Activated T-helper 2 cell treated with anti-CD3 and anti-CD28 coated beads, Interferon-gamma antibody, Interleukin-2, Interleukin-4, amounts not matched to agents 10 μg/mL and 5 μg/mL and 100 μg/mL, durations not matched to agents 14 hours and 24 hours and 36 hours (primary cell): ENCODE measurements at regions of chr3 and their contacts with region 1.

Region 1: GRCh38 chr3:99825004-99825640 is 7.5 kb downstream of the CMSS1 start:
- DNase-seq: no peak
- H3K4me3 Mint-ChIP-seq: peak overlapping the region; percentile 24
- H3K27ac Mint-ChIP-seq: peak overlapping the region; percentile 52
- H3K4me1 Mint-ChIP-seq: peaks cover 39% of the 10 kb centered on the region
- H3K27me3 Mint-ChIP-seq: no peaks in the 10 kb centered on the region

Region 2: GRCh38 chr3:99842826-99843589 is 17.9 kb after region 1 on chr3:
- intact Hi-C with region 1: loop called (anchors 1 kb)
- DNase-seq: no peak
- H3K4me3 Mint-ChIP-seq: no peak overlapping the region
- H3K27ac Mint-ChIP-seq: no peak overlapping the region
- H3K4me1 Mint-ChIP-seq: peaks cover 26% of the 10 kb centered on the region
- H3K27me3 Mint-ChIP-seq: no peaks in the 10 kb centered on the region

Region 3: DNA sequence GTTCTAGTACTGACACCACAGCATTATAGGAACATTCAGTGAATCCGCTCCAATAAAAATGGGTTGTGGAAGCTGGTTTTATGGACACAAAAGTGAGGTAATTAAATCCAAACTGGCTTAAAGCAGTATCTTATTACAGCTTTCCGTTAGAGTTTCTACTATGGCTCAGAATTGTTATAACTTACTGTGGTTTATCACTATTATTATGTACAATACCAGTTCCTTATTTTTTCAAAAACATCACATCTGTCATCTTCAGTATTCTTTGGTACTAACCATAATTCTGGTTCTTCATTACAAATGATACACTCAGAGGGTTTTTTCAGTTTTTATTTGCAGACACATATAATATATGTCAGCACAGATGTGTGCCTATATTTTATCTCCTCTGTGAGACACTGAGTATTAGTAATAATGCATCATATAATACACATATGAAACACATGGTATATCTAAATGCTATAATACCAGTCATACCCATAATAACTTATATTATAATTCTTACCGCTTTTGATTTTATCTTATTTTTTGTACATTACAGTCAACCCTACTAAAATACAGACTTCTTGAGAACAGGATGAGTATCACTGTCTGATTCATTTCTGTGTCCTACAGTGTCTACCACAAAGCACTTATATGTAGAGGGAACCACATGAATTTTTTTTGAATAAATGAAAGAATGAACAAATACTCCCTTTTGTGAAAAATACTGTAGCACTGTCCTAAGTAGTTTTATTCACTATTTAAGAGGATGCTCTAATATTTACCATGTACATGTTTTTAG is 31.5 kb after region 1 on chr3:
- intact Hi-C with region 1: loop called (anchors 1 kb)
- DNase-seq: no peak
- H3K4me3 Mint-ChIP-seq: no peak overlapping the region
- H3K27ac Mint-ChIP-seq: peak overlapping the region; percentile 89
- H3K4me1 Mint-ChIP-seq: peaks cover 70% of the 10 kb centered on the region
- H3K27me3 Mint-ChIP-seq: no peaks in the 10 kb centered on the region

Region 4: DNA sequence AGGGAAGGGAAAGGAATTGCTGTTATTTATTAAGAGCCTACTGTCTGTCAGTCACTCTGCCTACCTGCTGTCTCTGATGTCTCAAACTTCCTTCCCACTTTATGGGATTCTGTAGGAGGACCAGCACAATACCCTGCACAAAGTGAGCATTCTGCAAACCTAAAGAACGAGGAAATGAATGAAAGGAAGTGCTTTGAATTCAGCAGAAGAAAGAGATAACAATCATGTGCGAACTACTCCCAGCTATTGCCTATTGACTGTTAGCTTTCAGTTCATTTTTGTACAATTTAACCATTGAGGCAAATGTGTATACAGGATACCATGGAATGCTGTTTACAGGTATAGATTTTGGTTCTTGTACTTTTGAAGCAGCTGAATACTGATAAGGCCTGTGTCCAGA is 59.4 kb after region 1 on chr3:
- intact Hi-C with region 1: no loop called
- DNase-seq: no peak
- H3K4me3 Mint-ChIP-seq: no peak overlapping the region
- H3K27ac Mint-ChIP-seq: no peak overlapping the region
- H3K4me1 Mint-ChIP-seq: peaks cover 29% of the 10 kb centered on the region
- H3K27me3 Mint-ChIP-seq: no peaks in the 10 kb centered on the region

Region 5: DNA sequence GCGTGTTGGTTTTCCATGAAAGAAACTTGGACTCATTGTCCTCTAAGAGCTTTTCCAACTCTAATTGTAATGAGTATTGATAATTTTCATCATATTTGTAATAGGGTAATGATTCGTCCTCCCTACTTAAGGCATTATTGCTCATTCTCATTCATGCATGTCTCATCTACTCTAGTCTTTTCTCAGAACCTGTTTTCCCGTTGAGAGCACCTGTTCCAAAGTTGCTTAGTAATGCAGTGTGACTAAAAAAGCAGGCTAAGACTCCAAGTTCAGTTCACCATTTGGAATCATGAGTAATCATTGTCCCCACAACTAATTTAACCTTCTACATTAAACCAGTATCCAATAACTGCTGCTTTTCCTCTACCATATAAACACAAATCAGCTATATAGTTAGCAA is 205.2 kb after region 1 on chr3:
- intact Hi-C with region 1: loop called (anchors 5 kb)
- DNase-seq: no peak
- H3K4me3 Mint-ChIP-seq: no peak overlapping the region
- H3K27ac Mint-ChIP-seq: no peak overlapping the region
- H3K4me1 Mint-ChIP-seq: peaks cover 18% of the 10 kb centered on the region
- H3K27me3 Mint-ChIP-seq: no peaks in the 10 kb centered on the region